ENCODE measurements at regions of chr19 and their contacts with region 1.

Region 1: DNA sequence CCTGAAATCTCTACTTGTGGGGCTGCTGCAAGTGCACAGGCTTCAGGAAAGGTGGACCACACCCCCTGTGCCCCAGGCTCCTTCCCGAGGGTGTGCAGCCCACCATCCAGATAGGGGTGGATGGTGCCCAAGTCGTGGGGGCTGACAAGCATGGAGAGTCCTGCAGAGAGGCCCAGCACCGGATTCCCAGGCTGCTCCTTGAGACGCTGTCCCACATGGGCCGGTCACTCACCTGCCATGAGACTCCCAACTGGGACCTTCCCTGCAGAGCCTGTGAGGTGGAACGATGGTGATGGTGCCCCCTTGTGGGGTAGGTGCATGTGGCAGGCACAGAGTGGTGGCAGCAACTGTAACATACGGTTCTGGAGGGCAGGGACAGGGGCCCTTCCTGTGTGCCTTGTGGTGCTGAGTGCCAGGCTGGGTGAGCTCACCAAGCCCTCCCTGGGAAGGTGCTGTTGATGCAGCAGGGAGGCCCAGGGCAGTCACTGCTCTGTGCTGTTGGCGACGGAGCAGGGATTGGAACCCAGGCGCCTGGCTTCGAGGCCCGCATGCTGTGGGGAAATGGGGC is 33.0 kb downstream of the PPP1R37 start:
- DNase-seq: peak; percentile 76 to 84
- H3K4me3 ChIP-seq: no peak overlapping the region
- H3K4me3 Mint-ChIP-seq: no peak overlapping the region
- H3K27ac Mint-ChIP-seq: peak overlapping the region; percentile 17
- H3K4me1 ChIP-seq: peaks cover 12% of the 10 kb centered on the region
- H3K4me1 Mint-ChIP-seq: peaks cover 30% of the 10 kb centered on the region
- H3K27me3 ChIP-seq: no peaks in the 10 kb centered on the region
- H3K27me3 Mint-ChIP-seq: no peaks in the 10 kb centered on the region
- CTCF ChIP-seq: peak; percentile 65 to 82

Region 2: GRCh38 chr19:45016388-45017319 is 109.4 kb before region 1 on chr19:
- CTCF ChIA-PET with region 1: no interaction called
- POLR2A ChIA-PET with region 1: no interaction called
- intact Hi-C with region 1: loop called (anchors 1 kb)
- DNase-seq: peak; percentile 76 to 88
- H3K4me3 ChIP-seq: no peak overlapping the region
- H3K4me3 Mint-ChIP-seq: no peak overlapping the region
- H3K27ac Mint-ChIP-seq: no peak overlapping the region
- H3K4me1 ChIP-seq: no peaks in the 10 kb centered on the region
- H3K4me1 Mint-ChIP-seq: no peaks in the 10 kb centered on the region
- H3K27me3 ChIP-seq: no peaks in the 10 kb centered on the region
- H3K27me3 Mint-ChIP-seq: no peaks in the 10 kb centered on the region
- CTCF ChIP-seq: peak; percentile 73 to 83

Region 3: DNA sequence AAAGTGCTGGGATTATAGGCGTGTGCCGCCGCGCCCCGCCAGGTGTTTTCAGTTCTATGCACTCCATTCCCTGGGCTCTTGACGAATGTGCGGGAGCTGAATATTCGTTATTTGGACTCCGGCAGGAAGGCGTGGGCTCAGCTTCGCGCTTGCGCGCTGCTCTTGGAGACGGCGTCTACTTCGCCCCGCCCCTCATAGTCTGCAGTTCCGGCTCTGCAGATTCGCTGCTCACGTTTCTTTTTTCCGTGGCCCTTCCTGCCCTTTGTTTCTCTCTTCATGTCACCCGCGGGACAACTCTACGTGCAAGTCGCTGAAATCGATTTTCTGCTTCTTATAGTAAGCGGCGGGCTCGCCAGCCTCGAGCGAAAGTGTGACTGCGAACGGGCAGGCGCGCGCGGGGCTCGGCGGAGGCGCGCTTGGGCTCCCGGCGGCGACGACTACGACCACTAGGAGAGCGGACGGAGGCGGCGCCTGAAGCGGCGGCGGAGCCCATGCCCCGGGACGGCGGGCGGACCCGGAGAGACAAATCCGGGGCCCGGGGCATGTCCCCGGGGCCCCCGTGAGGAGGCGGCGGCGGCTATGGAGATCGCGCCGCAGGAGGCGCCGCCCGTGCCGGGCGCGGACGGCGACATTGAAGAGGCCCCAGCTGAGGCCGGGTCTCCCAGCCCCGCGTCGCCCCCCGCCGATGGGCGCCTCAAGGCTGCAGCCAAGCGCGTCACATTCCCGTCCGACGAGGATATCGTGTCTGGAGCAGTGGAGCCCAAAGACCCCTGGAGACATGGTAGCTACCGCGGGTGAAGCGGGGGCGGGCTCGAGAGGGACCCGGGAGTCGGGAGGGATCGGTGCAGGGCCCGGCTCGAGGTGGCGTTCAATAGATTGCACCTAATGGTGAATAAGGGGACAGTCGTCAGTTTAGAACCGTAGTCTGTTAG is 33.0 kb before region 1 on chr19 and contains the start of gene PPP1R37:
- CTCF ChIA-PET with region 1: interaction called, 4 read pairs
- POLR2A ChIA-PET with region 1: no interaction called
- intact Hi-C with region 1: loop called (anchors 5 kb)
- DNase-seq: peak; percentile 96 to 97
- H3K4me3 ChIP-seq: peak within 1 kb of the TSS; percentile 93
- H3K4me3 Mint-ChIP-seq: peak within 1 kb of the TSS; percentile 84
- H3K27ac Mint-ChIP-seq: peak within 1 kb of the TSS; percentile 96
- H3K4me1 ChIP-seq: peaks cover 10% of the 10 kb centered on the region; the same call in 1 of the 2 replicates
- H3K4me1 Mint-ChIP-seq: peaks cover 31% of the 10 kb centered on the region
- H3K27me3 ChIP-seq: no peaks in the 10 kb centered on the region
- H3K27me3 Mint-ChIP-seq: no peaks in the 10 kb centered on the region
- CTCF ChIP-seq: no peak
- total RNA-seq, gene PPP1R37: 42.1 and 47.7 TPM in 2 replicates

Region 4: DNA sequence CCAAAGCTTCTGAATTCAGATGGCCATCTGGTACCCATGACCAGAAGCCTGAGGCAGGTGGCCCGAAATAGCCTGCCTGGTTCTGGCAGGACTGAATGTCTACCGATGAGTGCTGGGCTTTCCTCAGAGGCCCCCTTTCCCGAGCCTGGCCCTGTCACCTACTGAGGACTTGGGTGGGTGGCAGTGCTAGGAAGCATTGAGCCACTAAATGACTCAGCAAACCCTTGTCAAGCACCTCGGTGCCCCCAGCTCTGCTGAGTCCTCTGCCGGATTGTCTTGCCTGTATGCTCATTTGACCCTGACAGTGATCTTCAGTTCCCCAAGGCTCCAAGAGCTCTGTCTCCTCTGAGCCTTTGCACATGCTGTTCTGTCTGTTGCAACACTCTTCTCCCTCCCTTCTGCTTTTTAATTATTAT is 15.2 kb before region 1 on chr19:
- CTCF ChIA-PET with region 1: no interaction called
- POLR2A ChIA-PET with region 1: no interaction called
- intact Hi-C with region 1: loop called (anchors 2 kb)
- DNase-seq: no peak
- H3K4me3 ChIP-seq: no peak overlapping the region
- H3K4me3 Mint-ChIP-seq: no peak overlapping the region
- H3K27ac Mint-ChIP-seq: no peak overlapping the region
- H3K4me1 ChIP-seq: peaks cover 24% of the 10 kb centered on the region
- H3K4me1 Mint-ChIP-seq: peaks cover 20% of the 10 kb centered on the region
- H3K27me3 ChIP-seq: no peaks in the 10 kb centered on the region
- H3K27me3 Mint-ChIP-seq: no peaks in the 10 kb centered on the region
- CTCF ChIP-seq: no peak